ENCODE measurements at regions of chr2 and their contacts with region 1.

Region 1: DNA sequence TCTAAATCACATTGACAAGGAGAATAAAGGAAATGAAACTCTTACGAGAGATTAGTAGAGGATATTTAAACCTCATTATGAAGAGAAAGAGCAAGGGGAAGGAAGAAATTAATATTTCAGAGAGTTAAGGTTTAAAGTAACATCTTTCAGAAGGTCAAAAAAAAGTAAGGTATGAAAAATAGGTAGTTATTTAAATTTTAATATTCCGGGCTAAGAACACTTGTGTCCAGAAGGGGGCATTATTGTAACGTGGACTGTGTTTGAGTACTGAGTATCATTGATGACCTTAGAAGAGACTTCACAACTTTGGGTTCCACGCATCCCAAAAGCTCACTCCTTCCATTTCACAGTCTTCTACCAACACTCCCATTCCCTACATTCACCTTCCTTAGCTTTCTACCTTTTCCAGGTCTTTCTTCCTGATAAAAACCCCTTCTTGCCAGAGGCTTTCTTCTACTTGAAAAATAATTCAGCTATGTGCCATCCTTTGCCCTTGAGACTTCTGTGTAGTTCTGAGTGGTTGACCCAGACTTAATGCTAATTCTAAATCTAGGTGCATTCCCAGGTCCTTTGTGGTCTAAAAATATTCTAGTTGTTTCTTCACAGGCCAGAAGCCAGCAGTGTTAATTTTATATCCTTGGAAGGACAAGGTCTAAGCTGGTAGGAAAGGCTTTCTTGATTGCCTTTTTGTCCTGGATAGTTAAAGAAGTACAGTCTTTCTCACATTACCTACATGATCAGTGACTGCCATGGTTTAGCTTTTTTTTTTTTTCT is 16.5 kb downstream of the DYNC1I2 start:
- DNase-seq: peak; percentile 29
- ATAC-seq: peak; percentile 65; the same call in 1 of the 2 replicates
- H3K4me3 ChIP-seq: no peak overlapping the region
- H3K27ac ChIP-seq: no peak overlapping the region
- H3K4me1 ChIP-seq: peaks cover 0 to 4% of the 10 kb centered on the region in 2 experiments; a peak in 2 of 4 replicates
- H3K27me3 ChIP-seq: no peaks in the 10 kb centered on the region
- CTCF ChIP-seq: peak; percentile 41 to 60 (median 49); a peak in 4 of 6 replicates
- POLR2A ChIP-seq: no peak
- RAD21 ChIP-seq: peak; percentile 69

Region 2: GRCh38 chr2:171574149-171574795 is 129.5 kb before region 1 on chr2:
- CTCF ChIA-PET with region 1: interaction called, 8 read pairs
- POLR2A ChIA-PET with region 1: no interaction called
- RAD21 ChIA-PET with region 1: no interaction called
- intact Hi-C with region 1: loop called (anchors 5 kb)
- DNase-seq: peak; percentile 54
- ATAC-seq: peak; percentile 99
- H3K4me3 ChIP-seq: no peak overlapping the region
- H3K27ac ChIP-seq: no peak overlapping the region
- H3K4me1 ChIP-seq: 0 out of 4 replicates have a peak, but pooled peaks cover 0 to 6% of the 10 kb centered on the region in 2 experiments
- H3K27me3 ChIP-seq: no peaks in the 10 kb centered on the region
- CTCF ChIP-seq: peak; percentile 73 to 97 (median 88)
- POLR2A ChIP-seq: no peak
- RAD21 ChIP-seq: peak; percentile 97

Region 3: GRCh38 chr2:171692331-171692730 is 11.4 kb before region 1 on chr2:
- CTCF ChIA-PET with region 1: interaction called, 24 read pairs
- POLR2A ChIA-PET with region 1: interaction called, 3 read pairs
- RAD21 ChIA-PET with region 1: no interaction called
- intact Hi-C with region 1: no loop called
- DNase-seq: no peak
- ATAC-seq: no peak
- H3K4me3 ChIP-seq: no peak overlapping the region
- H3K27ac ChIP-seq: no peak overlapping the region
- H3K4me1 ChIP-seq: peaks cover 0 to 9% of the 10 kb centered on the region in 2 experiments; a peak in 2 of 4 replicates
- H3K27me3 ChIP-seq: no peaks in the 10 kb centered on the region
- CTCF ChIP-seq: no peak
- POLR2A ChIP-seq: no peak
- RAD21 ChIP-seq: no peak

Region 4: DNA sequence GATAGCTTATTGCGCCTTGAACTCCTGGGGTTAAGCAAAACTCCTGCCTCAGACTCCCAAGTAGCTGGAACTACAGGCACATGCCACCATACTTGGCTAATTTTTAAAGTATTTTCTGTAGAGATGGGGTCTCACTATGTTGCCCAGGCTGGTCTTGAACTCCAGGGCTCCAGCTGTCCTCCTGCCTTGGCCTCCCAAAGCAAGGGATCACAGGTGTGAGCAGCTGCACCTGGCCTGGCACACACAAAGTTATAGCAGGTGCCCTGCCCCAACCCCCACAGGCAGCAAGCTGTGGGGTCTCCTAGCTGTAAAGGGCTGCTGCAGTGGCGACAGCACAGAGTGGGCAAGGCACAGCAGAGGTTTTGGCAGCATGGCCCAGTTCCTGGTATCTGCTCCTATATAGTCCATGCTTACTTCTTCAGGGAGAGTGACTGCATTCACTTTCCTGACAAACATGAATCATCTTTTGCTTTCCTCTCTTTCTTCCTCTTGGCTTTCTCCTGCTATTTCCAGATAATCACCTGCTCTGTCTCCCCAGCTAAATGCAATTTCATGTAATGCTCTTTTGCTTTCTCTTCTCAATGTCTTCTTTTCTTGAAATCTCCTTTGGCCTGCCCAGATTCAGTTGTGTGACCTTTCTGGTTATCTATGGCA is 268.7 kb after region 1 on chr2:
- CTCF ChIA-PET with region 1: no interaction called
- POLR2A ChIA-PET with region 1: no interaction called
- RAD21 ChIA-PET with region 1: no interaction called
- intact Hi-C with region 1: no loop called
- DNase-seq: no peak
- ATAC-seq: no peak
- H3K4me3 ChIP-seq: no peak overlapping the region
- H3K27ac ChIP-seq: no peak overlapping the region
- H3K4me1 ChIP-seq: no peaks in the 10 kb centered on the region
- H3K27me3 ChIP-seq: no peaks in the 10 kb centered on the region
- CTCF ChIP-seq: no peak
- POLR2A ChIP-seq: no peak
- RAD21 ChIP-seq: no peak

Region 5: GRCh38 chr2:172102391-172103278 is 398.9 kb after region 1 on chr2 and contains the start of gene DLX2:
- CTCF ChIA-PET with region 1: interaction called, 7 read pairs
- POLR2A ChIA-PET with region 1: no interaction called
- RAD21 ChIA-PET with region 1: interaction called in 1 of 2 experiments, 3 read pairs
- intact Hi-C with region 1: loop called (anchors 1 kb)
- DNase-seq: peak; percentile 85
- ATAC-seq: peak; percentile 71
- H3K4me3 ChIP-seq: peak within 1 kb of the TSS; percentile 60 to 64
- H3K27ac ChIP-seq: peak within 1 kb of the TSS; percentile 53; the same call in 1 of the 2 replicates
- H3K4me1 ChIP-seq: peaks cover 41 to 57% of the 10 kb centered on the region in 2 experiments
- H3K27me3 ChIP-seq: no peaks in the 10 kb centered on the region
- CTCF ChIP-seq: no peak
- POLR2A ChIP-seq: no peak
- RAD21 ChIP-seq: no peak
- total RNA-seq, gene DLX2: 3.7 TPM

Region 6: DNA sequence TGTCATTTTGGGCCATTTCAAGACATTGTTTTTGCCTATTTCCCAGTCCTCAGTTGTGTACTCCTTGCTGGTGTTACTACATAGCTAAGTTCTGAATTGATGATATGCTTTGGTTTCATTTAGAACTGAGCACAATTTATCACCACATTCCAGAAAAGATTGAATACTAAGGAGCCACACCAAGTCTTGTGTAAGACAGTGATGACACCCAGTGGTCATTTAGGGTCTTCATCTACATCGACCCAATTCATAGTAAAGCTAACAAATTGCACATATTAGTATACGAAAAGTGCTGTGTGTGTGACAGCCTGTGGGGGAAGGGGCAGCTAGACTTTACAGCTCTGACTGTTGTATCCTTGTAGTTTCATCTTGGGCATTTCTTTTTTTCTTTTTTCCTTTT is 409.9 kb after region 1 on chr2:
- CTCF ChIA-PET with region 1: interaction called, 33 read pairs
- POLR2A ChIA-PET with region 1: no interaction called
- RAD21 ChIA-PET with region 1: interaction called in 1 of 2 experiments, 5 read pairs
- intact Hi-C with region 1: no loop called
- DNase-seq: no peak
- ATAC-seq: peak; percentile 83
- H3K4me3 ChIP-seq: no peak overlapping the region
- H3K27ac ChIP-seq: no peak overlapping the region
- H3K4me1 ChIP-seq: peaks cover 2% of the 10 kb centered on the region in 2 experiments; a peak in 3 of 4 replicates
- H3K27me3 ChIP-seq: no peaks in the 10 kb centered on the region
- CTCF ChIP-seq: peak; percentile 44 to 67 (median 57); a peak in 5 of 6 replicates
- POLR2A ChIP-seq: no peak
- RAD21 ChIP-seq: peak; percentile 83

Region 7: DNA sequence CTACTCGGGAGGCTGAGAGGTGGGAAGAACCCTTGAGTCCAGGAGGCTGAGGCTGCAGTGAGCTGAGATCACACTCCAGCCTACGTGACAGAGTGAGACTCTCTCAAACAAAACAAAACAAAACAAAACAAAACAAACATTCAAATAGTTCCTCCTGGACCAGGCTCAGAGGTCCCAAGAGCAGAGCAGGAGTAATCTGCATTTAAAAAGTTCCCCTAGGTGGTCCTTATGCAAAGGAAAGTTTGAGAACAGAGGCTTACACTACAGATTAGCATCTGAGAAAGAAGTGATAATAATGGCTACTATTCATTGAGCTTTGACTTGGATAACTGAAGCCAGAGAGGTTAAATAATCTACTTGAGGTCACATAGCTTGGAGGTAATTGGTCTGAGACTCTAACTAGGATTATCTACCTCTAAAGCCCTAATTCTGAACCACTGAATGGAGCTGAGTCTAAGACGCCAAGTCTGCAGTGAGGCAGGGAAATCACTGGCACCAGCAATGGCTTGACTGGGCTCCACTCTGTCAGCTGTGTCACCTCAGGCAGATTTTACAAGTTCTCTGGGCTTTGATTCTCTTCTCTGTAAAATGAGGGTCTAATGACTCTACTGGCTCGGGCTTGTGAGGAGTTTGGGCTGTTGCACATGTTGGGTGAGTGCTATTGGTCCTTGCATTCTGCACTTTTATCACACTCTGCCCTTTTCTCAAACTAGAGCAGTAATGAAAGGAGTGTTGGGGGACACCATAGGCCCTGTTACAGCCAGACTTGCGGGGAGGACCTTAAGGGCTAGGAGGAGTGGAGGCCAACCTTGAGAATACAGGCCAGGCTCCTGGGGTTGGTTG is 428.2 kb after region 1 on chr2:
- CTCF ChIA-PET with region 1: interaction called, 12 read pairs
- POLR2A ChIA-PET with region 1: no interaction called
- RAD21 ChIA-PET with region 1: interaction called in 1 of 2 experiments, 3 read pairs
- intact Hi-C with region 1: no loop called
- DNase-seq: no peak
- ATAC-seq: no peak
- H3K4me3 ChIP-seq: no peak overlapping the region
- H3K27ac ChIP-seq: no peak overlapping the region
- H3K4me1 ChIP-seq: no peaks in the 10 kb centered on the region
- H3K27me3 ChIP-seq: no peaks in the 10 kb centered on the region
- CTCF ChIP-seq: no peak
- POLR2A ChIP-seq: no peak
- RAD21 ChIP-seq: no peak

Region 8: GRCh38 chr2:172704072-172704936 is 1000.5 kb after region 1 on chr2:
- CTCF ChIA-PET with region 1: no interaction called
- POLR2A ChIA-PET with region 1: no interaction called
- RAD21 ChIA-PET with region 1: no interaction called
- intact Hi-C with region 1: loop called (anchors 5 kb)
- DNase-seq: no peak
- ATAC-seq: peak; percentile 98
- H3K4me3 ChIP-seq: no peak overlapping the region
- H3K27ac ChIP-seq: no peak overlapping the region
- H3K4me1 ChIP-seq: no peaks in the 10 kb centered on the region
- H3K27me3 ChIP-seq: 0 out of 2 replicates have a peak, but pooled peaks cover 3% of the 10 kb centered on the region
- CTCF ChIP-seq: peak; percentile 29 to 67 (median 60); a peak in 5 of 6 replicates
- POLR2A ChIP-seq: no peak
- RAD21 ChIP-seq: peak; percentile 46

Measured in HCT116 (cell line).